Left cardiac atrium (tissue), 4 donors: ENCODE measurements at regions of chr4 and their contacts with region 1.

Region 1: DNA sequence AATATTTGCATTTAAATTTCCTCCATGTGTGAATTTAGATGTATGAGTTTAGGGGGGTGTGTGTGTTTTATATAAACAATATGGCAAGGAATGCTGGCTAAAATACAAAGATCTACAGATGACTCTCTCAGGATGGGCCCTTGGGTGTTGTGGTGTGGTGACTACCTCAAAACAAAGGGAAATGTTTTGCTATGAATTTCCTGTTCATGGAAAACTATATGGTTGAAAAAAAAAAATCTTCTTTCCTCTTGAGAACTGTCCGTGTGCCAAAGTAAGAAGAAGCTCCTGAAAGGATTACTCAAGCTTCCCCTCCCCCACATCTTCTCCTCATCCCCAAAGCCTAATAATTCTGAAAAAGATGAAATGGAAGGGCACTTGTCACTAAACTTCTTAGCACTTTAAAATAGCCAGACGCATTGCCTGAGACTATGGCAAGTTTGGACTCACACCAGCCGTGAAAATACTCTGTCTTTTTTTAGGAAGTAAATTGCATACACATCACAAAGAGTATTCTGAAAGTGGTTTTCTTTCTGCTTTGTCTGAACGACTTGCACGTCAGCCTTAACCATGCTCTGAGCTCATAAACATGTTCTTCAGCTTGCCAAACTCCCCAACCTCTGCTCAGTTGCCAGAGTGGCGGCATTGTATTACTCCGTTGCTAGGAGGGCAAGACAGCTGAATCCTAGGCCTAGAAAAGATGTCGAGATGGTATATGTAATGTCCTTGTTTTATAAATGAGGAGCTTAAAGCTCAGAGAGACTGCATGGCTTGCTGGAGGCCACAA is 250.4 kb upstream of the JADE1 start:
- DNase-seq: no peak
- ATAC-seq: peak; percentile 58 to 62

Region 2: DNA sequence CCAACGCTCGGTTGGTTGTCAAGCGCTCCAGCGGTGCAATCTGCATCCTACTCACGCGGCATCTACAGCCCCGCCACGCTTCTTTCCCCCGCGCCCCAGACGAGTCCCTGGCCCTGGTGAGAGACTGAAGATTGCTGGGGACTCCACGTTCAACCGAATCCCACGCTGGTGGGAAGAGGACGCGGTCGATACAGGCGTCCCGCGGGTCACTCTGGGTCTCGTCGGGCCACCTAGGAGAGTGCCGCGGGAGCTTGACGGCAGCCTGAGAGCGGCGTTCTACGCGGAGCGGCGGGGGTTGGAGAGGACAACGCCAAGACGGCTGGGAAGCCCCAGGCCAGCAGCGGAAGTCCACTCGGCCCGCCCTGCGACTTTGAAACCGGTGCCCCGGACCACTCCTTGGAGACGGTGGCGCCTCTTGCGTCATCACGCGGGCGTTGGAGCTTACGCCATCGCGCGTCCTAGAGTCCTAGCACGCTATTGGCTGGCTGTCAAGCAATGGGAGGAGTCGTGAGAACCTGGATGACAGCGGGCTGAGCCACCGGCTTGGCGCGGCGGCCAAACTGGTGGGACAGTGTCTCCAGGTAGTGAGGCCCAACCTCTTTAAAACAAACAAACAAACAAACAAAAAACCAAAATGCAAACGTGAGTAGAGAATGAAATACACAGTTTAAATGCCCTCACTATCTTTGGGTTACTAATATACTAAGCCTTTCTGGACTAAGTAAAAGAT is 534.3 kb after region 1 on chr4 and contains the start of gene SCLT1:
- intact Hi-C with region 1: loop called in 1 of 2 experiments (anchors 10 kb)
- DNase-seq: peak; percentile 100
- ATAC-seq: peak; percentile 99
- total RNA-seq, gene SCLT1: 11.8 to 14.6 TPM